ENCODE measurements at regions of chrX and their contacts with region 1.

Region 1: DNA sequence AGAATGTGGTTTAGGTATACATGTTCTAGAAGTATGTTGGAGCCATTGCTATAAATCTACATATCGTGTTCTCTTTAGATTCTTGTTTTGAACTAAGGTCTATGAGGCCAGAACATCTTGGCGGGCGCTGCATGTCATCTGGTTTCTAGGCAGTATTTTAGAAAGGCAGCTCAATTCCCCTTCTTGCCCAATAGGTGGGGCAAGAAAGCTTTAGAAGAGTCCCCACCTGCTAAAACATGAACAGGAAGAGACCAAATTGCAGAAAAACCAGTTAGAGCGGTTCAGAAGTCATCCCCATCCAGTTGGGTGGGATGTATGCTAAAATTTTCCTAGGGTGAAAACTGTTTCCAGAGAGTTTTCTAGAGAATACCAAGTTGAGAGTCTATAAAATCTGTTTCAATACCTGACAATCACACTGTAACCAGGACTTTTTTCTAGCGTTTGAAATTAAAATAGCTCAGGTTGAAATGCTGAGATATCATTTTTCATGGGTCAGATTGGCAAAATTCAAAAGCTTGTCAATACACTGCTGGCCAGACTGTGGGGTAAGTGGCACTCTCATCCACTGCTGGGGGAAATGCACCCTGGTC is 17.5 kb upstream of the SH3KBP1 start:
- DNase-seq: no peak
- H3K4me3 ChIP-seq: no peak overlapping the region
- H3K27ac ChIP-seq: no peak overlapping the region
- H3K4me1 ChIP-seq: no peaks in the 10 kb centered on the region; a peak in 1 of 7 replicates
- H3K27me3 ChIP-seq: no peaks in the 10 kb centered on the region
- CTCF ChIP-seq: peak in 2 of 3 experiments; percentile 57 to 58; a peak in 3 of 4 replicates
- EP300 ChIP-seq: peak in 1 of 2 experiments; percentile 37; a peak in 1 of 3 replicates
- POLR2A ChIP-seq: no peak
- RAD21 ChIP-seq: peak; percentile 78 to 83

Region 2: DNA sequence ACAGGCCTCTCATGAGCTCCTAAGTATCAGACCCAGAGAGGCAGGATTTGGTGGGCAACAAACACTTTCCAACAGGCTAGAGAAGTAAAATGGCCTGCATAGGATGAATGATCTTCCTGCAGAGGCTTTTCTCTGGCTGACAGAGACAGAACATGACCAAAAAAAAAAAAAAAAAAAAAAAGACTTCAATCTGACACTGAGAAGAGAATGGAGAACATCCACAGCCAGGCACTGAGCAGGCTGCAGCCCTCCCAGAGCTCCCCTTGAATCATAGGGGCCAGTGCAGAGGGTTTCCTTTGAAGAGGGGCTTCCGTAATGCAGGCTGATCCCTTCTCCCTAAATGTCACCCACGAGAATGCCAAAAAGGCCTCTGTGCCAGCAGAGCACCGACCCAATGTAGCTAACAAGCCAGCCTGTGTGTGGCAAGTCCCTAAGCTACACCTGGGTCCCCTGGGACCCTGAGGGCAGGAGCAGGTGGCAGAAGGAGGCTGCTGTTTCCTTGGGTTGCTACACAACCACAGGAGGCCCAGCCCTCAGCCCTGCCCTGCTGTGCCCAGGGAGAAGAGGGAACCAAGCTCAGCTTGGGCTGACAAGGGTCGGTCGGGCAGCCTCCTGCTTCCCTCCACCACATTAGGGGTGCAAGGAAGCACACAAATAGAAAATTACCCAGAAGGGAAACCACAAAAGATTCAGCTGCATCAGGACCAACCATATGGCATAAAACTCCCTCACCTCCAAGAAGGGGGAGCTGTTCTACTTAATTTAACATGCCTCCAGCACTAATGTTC is 156.3 kb after region 1 on chrX:
- CTCF ChIA-PET with region 1: interaction called, 16 read pairs
- POLR2A ChIA-PET with region 1: interaction called, 3 read pairs
- DNase-seq: no peak
- H3K4me3 ChIP-seq: no peak overlapping the region
- H3K27ac ChIP-seq: no peak overlapping the region
- H3K4me1 ChIP-seq: 0 out of 7 replicates have a peak, but pooled peaks cover 0 to 3% (median 0%) of the 10 kb centered on the region in 4 experiments
- H3K27me3 ChIP-seq: no peaks in the 10 kb centered on the region
- CTCF ChIP-seq: no peak
- EP300 ChIP-seq: no peak
- POLR2A ChIP-seq: no peak
- RAD21 ChIP-seq: no peak